Aorta (tissue), 5 donors: ENCODE measurements at regions of chr3 and their contacts with region 1.

Region 1: DNA sequence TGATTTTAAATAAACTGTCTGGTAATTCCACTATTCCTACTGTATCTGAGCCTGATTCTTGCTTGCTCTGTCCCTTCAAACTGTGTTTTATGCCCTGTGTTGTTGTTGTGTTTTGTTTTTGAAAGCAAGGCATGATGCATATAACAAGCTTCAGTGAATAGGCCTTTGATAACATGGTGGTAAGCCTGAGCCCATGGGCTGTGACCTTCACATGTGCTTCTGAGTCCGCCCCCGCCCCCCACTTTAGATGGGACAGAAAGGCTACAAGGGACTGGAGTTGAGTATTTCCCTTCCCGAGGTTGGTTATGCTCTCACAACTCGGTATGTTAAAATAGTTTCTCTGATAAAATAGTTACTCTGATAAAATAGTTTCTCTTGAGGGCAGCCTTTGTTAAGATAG is 119.0 kb upstream of the WNT7A start:
- DNase-seq: no peak
- ATAC-seq: no peak
- H3K4me3 ChIP-seq: no peak overlapping the region
- H3K27ac ChIP-seq: no peak overlapping the region
- H3K4me1 ChIP-seq: no peaks in the 10 kb centered on the region
- H3K27me3 ChIP-seq: no peaks in the 10 kb centered on the region

Region 2: GRCh38 chr3:13927295-13927694 is 71.5 kb before region 1 on chr3:
- intact Hi-C with region 1: loop called in 1 of 2 experiments (anchors 10 kb)
- DNase-seq: no peak
- ATAC-seq: no peak
- H3K4me3 ChIP-seq: no peak overlapping the region
- H3K27ac ChIP-seq: no peak overlapping the region
- H3K4me1 ChIP-seq: no peaks in the 10 kb centered on the region
- H3K27me3 ChIP-seq: no peaks in the 10 kb centered on the region